ENCODE measurements at regions of chr3 and their contacts with region 1.

Region 1: DNA sequence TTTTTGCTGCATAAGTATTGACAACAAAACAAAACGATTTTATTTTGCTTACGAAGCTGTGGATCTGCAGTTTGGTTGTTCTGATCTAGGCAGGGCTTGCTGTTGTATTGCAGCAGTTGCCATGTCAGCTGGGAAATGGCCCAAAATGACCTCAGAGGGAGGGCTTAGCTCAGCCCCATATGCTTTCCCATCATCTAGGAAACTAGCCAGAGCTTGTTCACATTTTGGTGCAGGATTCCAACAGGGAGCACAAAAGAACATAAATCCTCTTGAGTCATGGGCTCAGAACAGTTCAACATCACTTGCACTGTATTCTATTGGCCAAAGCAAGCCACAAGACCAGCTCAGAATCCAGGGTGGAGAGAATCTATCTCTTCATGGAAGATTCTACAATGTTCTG is 42.2 kb upstream of the ROBO2 start:
- DNase-seq: no peak
- ATAC-seq: no peak
- H3K4me3 ChIP-seq: no peak overlapping the region
- H3K27ac ChIP-seq: no peak overlapping the region
- H3K4me1 ChIP-seq: no peaks in the 10 kb centered on the region
- H3K27me3 ChIP-seq: no peaks in the 10 kb centered on the region
- CTCF ChIP-seq: no peak
- POLR2A ChIP-seq: no peak
- RAD21 ChIP-seq: no peak

Region 2: GRCh38 chr3:77026904-77027634 is 29.3 kb after region 1 on chr3:
- CTCF ChIA-PET with region 1: no interaction called
- POLR2A ChIA-PET with region 1: no interaction called
- RAD21 ChIA-PET with region 1: no interaction called
- intact Hi-C with region 1: loop called (anchors 2 kb)
- DNase-seq: no peak
- ATAC-seq: no peak
- H3K4me3 ChIP-seq: no peak overlapping the region
- H3K27ac ChIP-seq: no peak overlapping the region
- H3K4me1 ChIP-seq: no peaks in the 10 kb centered on the region
- H3K27me3 ChIP-seq: no peaks in the 10 kb centered on the region
- CTCF ChIP-seq: no peak
- POLR2A ChIP-seq: no peak
- RAD21 ChIP-seq: no peak

Measured in HCT116 (cell line).